Gastrocnemius medialis (tissue), 4 donors: ENCODE measurements at regions of chr17 and their contacts with region 1.

Region 1: DNA sequence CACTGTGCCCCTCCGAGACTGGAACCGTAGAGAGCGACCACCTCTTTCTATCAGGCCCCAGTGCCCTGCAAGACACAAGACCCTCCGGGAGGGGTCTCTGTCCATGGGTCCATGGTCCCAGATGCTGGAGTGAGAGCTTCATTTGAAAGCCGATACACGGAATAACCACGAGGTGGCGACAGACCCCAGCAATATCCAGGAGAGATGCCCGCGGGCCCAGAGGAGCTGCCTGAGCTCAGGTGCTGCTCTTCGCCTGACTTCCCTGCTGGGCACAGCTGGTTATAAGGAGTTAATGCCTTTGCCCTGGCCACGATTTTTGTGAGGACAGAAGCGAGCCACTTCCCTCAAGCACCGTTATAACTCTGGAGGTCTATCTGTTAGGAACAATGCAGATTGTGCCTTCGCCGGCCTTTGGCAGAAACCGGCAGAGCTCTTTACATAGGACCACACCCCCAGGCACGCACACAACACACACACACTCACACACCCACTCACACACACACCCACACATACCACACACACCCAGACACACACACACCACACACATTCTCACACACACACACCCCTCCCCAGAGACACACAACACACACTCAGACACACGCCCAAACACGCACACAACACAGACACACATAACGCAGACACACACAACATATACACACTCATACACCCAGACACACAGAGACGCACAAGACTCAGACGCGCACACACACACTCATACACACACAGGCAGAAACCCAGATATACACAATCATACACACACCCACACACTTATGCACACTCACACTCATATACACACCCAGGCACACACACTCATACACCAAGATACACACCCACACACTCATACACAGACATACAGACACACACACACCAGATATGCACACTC is 436.4 kb downstream of the SOX9 start:
- DNase-seq: peak in 1 of 2 donors; percentile 14
- ATAC-seq: no peak
- H3K4me3 ChIP-seq: no peak overlapping the region
- H3K27ac ChIP-seq: no peak overlapping the region
- H3K4me1 ChIP-seq: no peaks in the 10 kb centered on the region
- H3K27me3 ChIP-seq: no peaks in the 10 kb centered on the region
- CTCF ChIP-seq: peak in 4 of 5 experiments; percentile 33 to 62 (median 50)
- POLR2A ChIP-seq: no peak

Region 2: DNA sequence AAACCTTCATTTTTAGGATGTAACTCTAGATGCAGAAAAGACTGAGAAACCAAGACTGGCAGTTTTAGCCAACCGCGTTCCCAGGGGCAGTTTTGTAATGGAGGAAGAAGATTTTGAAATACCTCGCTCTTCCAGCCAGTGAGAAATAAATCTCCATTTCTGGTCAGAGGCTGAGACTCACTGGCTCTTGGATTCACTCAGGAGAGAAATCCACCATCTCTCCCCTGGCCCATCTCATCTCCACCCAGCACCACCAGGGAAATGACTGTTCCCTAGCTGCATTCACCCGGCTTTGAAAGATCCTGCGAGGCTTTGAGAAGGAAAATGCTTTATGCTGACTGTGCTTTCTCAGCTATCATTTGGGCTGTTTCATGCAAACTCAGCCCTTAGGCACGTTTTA is 251.1 kb before region 1 on chr17:
- in situ Hi-C with region 1: no loop called
- intact Hi-C with region 1: no loop called
- DNase-seq: peak in 1 of 2 donors; percentile 35
- ATAC-seq: peak; percentile 53 to 56
- H3K4me3 ChIP-seq: no peak overlapping the region
- H3K27ac ChIP-seq: no peak overlapping the region
- H3K4me1 ChIP-seq: no peaks in the 10 kb centered on the region
- H3K27me3 ChIP-seq: no peaks in the 10 kb centered on the region
- CTCF ChIP-seq: no peak
- POLR2A ChIP-seq: no peak

Region 3: DNA sequence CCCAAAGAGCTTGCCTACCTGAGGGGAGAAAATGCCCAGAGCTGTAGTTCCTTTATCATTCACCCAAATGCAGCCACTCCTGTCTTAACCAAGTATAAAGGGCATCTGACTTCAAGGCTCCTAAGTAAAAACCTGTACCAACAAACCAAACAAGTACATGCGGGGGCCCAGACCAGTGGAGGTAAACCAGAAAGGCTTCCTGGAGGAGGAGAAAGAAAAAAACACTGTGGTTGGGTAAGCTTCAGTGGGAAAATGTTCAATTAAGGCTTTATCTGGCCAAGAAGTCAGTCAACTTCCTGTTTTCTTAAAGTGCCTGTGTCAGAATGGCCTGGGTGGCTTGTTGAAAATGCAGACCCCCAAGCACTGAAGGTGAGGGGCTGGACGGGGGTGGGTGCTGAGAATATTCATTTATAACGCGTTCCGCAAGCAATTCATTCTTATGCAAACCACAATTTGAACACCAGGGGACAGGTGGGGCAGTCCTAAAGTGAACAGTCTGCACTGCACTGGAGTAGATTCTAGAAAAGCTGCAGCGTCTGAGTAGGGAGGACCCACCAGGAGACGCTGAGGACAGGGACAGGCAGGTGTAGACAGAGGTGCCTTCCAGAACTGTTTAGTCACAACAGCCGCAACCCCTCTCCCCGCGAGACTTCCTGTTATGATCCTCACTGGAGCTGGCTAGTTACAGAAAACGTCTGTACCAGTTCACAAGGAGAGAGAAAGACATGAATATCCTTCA is 30.8 kb after region 1 on chr17:
- in situ Hi-C with region 1: no loop called
- intact Hi-C with region 1: no loop called
- DNase-seq: no peak
- ATAC-seq: no peak
- H3K4me3 ChIP-seq: no peak overlapping the region
- H3K27ac ChIP-seq: no peak overlapping the region
- H3K4me1 ChIP-seq: no peaks in the 10 kb centered on the region
- H3K27me3 ChIP-seq: peaks cover 14 to 18% (median 18%) of the 10 kb centered on the region in 3 donors
- CTCF ChIP-seq: no peak
- POLR2A ChIP-seq: no peak

Region 4: DNA sequence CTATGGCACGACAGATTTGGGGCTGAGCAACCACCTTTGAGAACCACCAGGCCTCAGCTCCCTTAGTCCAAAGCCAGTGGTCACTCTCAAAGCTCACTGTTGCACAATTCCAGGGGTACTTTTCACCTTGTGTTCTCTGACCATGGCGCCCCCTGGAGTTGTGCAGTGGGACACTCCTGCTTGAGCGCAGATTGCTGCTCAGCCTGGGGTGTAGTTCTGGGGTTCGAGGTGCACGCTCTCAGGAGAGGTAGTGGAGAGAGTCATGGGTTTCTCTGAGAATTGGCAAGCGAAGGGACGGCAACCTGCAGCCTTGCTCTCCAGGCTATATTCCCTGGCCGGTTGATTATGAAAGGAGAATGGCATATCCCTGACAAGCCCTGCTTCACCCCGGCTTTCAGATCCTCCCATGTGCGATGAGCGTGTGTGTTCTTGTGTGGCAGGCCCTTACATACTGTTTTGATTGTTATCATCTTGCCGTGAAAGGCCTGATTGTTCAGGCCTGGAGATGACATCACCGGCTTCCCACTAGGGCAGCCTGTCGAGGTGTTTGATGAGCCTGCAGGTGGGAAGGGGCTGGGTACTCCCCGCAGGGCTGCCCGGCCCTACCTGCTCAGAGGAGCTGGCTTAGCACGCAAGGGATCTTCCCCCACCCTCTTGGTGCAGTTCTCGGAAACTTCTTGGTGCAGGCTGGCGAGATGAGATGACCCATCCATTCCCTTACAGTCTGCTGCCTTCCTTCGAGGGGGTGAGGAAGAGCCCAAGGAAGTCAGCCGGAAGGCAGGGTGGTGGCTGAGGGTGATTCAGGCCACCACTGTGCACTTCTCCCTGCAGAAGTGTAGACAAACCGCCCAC is 104.1 kb after region 1 on chr17:
- in situ Hi-C with region 1: loop called in 1 of 4 experiments (anchors 25 kb)
- intact Hi-C with region 1: no loop called
- DNase-seq: no peak
- ATAC-seq: no peak
- H3K4me3 ChIP-seq: no peak overlapping the region
- H3K27ac ChIP-seq: no peak overlapping the region
- H3K4me1 ChIP-seq: no peaks in the 10 kb centered on the region
- H3K27me3 ChIP-seq: no peaks in the 10 kb centered on the region
- CTCF ChIP-seq: no peak
- POLR2A ChIP-seq: no peak